ENCODE measurements at regions of chr10 and their contacts with region 1.

Region 1: GRCh38 chr10:4813023-4813422 is 13.0 kb upstream of the AKR1E2 start:
- DNase-seq: peak; percentile 96
- ATAC-seq: peak; percentile 38
- H3K4me3 ChIP-seq: no peak overlapping the region
- H3K27ac ChIP-seq: no peak overlapping the region
- H3K4me1 ChIP-seq: peaks cover 5% of the 10 kb centered on the region; the same call in 1 of the 2 replicates
- H3K27me3 ChIP-seq: no peaks in the 10 kb centered on the region
- CTCF ChIP-seq: no peak
- POLR2A ChIP-seq: no peak
- RAD21 ChIP-seq: no peak; the same call in 1 of the 2 replicates

Region 2: DNA sequence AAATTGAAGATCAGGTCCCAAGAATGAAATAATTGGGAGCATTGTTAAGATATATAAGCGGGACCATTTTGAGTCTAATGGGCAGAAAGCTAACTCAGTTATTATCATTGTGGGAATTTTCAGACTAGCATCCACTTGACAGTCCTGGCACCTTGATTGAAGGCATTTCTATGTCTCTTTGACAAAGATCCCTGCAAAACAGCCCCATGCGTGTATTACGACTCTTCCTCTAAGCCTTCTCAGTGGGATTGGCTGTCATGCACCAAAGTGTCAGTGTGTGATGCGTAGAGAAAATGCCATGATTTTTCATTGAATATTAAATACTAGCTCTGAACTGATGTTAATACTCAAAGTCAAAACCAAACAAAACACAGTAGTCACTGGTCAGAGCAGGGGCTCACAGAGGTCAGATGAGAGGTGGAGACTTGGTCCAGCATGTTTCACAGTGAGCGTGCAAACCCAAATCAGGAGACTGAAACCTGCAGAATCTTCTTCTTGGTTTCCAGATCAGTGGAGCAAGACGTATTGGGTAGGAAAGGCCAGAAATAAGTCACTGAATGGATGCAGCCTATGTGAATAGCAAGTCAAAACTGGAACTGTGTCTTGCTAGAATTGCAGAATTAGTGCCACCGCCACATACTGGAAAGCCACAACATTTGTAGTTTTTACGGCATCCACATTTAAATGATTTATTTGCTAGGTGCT is 290.6 kb before region 1 on chr10:
- CTCF ChIA-PET with region 1: no interaction called
- POLR2A ChIA-PET with region 1: no interaction called
- dilution Hi-C with region 1: no loop called
- in situ Hi-C with region 1: no loop called
- intact Hi-C with region 1: no loop called
- DNase-seq: no peak
- ATAC-seq: no peak
- H3K4me3 ChIP-seq: no peak overlapping the region
- H3K27ac ChIP-seq: no peak overlapping the region
- H3K4me1 ChIP-seq: no peaks in the 10 kb centered on the region; the same call in 1 of the 2 replicates
- H3K27me3 ChIP-seq: no peaks in the 10 kb centered on the region
- CTCF ChIP-seq: no peak
- POLR2A ChIP-seq: no peak
- RAD21 ChIP-seq: no peak

Region 3: GRCh38 chr10:5385224-5385623 is 572.2 kb after region 1 on chr10:
- CTCF ChIA-PET with region 1: interaction called, 4 read pairs
- POLR2A ChIA-PET with region 1: no interaction called
- dilution Hi-C with region 1: no loop called
- in situ Hi-C with region 1: no loop called
- intact Hi-C with region 1: loop called (anchors 10 kb)
- DNase-seq: no peak
- ATAC-seq: no peak
- H3K4me3 ChIP-seq: no peak overlapping the region
- H3K27ac ChIP-seq: no peak overlapping the region
- H3K4me1 ChIP-seq: no peaks in the 10 kb centered on the region
- H3K27me3 ChIP-seq: peaks cover 7% of the 10 kb centered on the region
- CTCF ChIP-seq: no peak
- POLR2A ChIP-seq: no peak
- RAD21 ChIP-seq: no peak

Region 4: DNA sequence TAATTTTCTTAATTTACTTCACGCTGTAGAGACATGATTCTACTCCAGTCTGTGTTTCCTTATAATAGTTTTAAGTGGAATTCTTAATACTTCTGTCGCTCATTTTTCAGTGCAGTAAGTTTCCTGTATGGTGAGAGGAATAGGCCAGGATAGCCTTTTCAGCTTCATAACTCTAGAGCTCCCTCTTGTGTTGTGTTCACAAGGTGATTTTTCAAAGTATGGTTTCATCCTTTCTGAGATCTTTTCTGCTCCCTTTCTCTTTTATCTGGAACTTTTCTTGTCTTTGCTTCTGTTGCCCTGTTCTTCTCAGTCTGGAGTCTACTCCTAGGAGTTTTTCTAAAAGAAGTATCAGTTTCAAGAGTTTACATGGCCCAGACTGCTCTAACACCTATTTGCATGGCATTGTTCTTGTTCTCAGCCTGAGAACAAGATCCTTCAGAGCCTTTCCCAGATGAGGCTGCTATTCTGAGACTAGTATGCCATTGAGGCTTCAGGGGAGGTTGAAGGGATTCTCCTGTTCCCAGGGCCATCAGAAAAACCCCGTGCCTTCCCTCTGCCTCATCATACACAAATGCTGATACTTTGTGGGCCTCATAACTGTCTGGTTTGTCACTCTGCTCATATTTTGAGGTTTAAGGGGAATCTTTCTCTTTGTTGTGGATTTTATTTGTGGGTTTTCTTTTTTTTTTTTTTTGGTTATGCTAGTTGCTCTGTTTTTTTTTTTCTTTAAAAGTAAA is 621.2 kb after region 1 on chr10:
- CTCF ChIA-PET with region 1: interaction called, 6 read pairs
- POLR2A ChIA-PET with region 1: no interaction called
- dilution Hi-C with region 1: no loop called
- in situ Hi-C with region 1: no loop called
- intact Hi-C with region 1: loop called (anchors 1 kb)
- DNase-seq: peak; percentile 81
- ATAC-seq: peak; percentile 89
- H3K4me3 ChIP-seq: no peak overlapping the region
- H3K27ac ChIP-seq: peak overlapping the region; percentile 74; the same call in 1 of the 2 replicates
- H3K4me1 ChIP-seq: peaks cover 7% of the 10 kb centered on the region
- H3K27me3 ChIP-seq: no peaks in the 10 kb centered on the region
- CTCF ChIP-seq: peak; percentile 74
- POLR2A ChIP-seq: no peak
- RAD21 ChIP-seq: peak; percentile 66